SK-N-SH (cell line): ENCODE measurements at regions of chr2 and their contacts with region 1.

Region 1: DNA sequence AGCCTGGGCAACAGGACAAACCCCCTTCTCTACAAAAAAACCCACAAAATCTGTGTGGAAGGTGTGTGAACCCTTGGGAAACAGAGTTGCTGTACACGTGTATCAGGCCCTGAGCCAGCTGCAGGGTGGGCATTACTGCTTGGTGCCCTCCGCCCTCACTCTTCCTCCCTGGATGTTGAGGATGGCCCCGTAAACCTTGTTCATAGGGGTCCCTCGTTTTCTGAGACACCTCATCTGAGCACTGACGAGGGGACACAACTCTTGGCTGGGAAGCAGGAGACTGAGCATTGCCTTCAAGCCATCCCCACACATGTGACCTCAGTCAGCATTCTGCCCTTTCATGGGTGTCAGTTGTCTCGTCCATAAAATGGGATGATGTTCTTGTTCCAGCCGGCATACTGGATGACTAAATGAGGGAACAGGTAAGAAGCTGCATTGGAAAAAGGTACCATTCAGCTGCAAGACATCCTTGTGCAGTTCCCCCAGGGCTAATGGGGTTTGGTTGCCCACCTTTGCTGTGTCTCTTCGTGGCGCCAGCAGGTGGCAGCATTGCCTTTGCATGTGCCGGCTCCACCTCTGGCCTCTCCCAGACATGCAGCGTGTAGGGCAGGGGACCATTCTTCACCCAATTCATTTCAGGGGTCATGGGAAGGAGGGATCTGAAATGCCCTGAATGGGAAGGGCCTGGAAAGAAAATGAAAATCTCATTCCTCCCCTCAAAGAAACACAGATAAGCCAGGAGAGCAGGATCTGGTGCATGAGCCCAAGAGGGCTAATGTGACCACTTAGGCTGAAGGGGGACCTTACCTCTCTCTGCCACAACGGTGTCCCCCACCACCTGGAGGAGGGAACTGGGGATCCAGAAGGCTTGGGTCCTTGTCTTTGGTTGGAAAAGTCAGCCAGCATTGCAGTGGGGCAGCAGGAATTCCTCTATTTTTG is 36.4 kb upstream of the HAAO start:
- DNase-seq: peak; percentile 92
- H3K4me3 ChIP-seq: no peak overlapping the region; a peak in 1 of 4 replicates
- H3K27ac ChIP-seq: no peak overlapping the region
- H3K4me1 ChIP-seq: peaks cover 0 to 12% of the 10 kb centered on the region in 2 experiments; a peak in 1 of 4 replicates
- H3K27me3 ChIP-seq: no peaks in the 10 kb centered on the region
- CTCF ChIP-seq: peak; percentile 99
- EP300 ChIP-seq: no peak
- RAD21 ChIP-seq: peak; percentile 96

Region 2: GRCh38 chr2:42844901-42845821 is 16.4 kb after region 1 on chr2:
- CTCF ChIA-PET with region 1: interaction called, 88 read pairs
- POLR2A ChIA-PET with region 1: no interaction called
- DNase-seq: no peak
- H3K4me3 ChIP-seq: no peak overlapping the region
- H3K27ac ChIP-seq: no peak overlapping the region
- H3K4me1 ChIP-seq: no peaks in the 10 kb centered on the region; a peak in 1 of 4 replicates
- H3K27me3 ChIP-seq: no peaks in the 10 kb centered on the region
- CTCF ChIP-seq: no peak
- EP300 ChIP-seq: no peak
- RAD21 ChIP-seq: no peak

Region 3: GRCh38 chr2:42906557-42907411 is 78.0 kb after region 1 on chr2:
- CTCF ChIA-PET with region 1: interaction called, 21 read pairs
- POLR2A ChIA-PET with region 1: no interaction called
- DNase-seq: peak; percentile 85
- H3K4me3 ChIP-seq: no peak overlapping the region
- H3K27ac ChIP-seq: peak overlapping the region in 1 of 2 experiments; percentile 90; a peak in 2 of 4 replicates
- H3K4me1 ChIP-seq: peaks cover 10 to 40% of the 10 kb centered on the region in 2 experiments
- H3K27me3 ChIP-seq: no peaks in the 10 kb centered on the region
- CTCF ChIP-seq: no peak
- EP300 ChIP-seq: peak in 1 of 2 experiments; percentile 82; a peak in 1 of 4 replicates
- RAD21 ChIP-seq: no peak

Region 4: DNA sequence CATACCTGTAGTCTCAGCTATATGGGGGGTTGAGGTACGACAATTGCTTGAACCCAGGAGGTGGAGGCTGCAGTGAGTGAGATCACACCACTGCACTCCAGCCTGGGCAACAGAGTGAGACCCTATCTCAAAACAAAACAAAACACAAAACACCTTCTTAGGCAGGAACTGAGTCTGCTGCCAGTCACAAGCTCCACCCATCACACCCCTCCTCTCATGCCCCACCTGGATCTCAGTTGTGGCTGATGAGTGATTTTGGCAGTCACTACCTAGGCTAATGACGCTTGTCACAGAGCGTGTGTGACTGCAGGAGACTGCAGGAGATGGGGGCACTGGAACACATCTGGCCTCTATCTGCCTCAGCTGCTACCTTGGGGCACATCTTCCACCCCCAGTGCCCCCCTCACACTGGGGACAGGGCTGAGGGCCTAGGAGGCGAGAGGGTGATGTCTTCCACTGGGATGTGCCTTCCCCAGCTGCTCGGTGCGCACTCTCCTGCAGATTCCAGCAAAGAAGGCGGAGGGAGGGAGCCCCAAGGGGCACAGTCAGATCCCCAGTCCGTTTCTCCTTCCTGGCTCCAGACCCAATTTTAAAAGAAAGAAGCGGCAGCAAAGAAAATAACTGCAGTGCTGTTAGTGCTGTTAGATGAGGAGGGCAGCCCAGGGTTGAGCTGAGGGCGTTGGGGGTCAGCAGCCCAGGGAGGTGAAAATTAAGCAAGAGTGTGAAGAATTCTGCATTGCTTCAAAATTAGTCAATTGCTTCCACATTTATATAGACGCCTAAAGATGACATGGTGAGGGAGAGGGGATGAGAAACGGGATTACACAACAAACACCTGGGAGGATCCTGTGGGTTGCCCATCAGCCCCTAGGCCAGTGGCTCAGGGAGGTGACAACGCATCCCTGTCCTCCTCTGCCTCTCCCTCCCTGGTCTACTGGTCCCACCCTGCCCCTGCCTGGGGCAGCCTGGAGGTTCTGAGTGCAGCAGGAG is 107.2 kb after region 1 on chr2:
- CTCF ChIA-PET with region 1: interaction called, 56 read pairs
- POLR2A ChIA-PET with region 1: no interaction called
- DNase-seq: no peak
- H3K4me3 ChIP-seq: no peak overlapping the region
- H3K27ac ChIP-seq: no peak overlapping the region
- H3K4me1 ChIP-seq: peaks cover 0 to 22% of the 10 kb centered on the region in 2 experiments; a peak in 1 of 4 replicates
- H3K27me3 ChIP-seq: no peaks in the 10 kb centered on the region
- CTCF ChIP-seq: no peak
- EP300 ChIP-seq: no peak
- RAD21 ChIP-seq: no peak

Region 5: GRCh38 chr2:43537137-43537536 is 708.4 kb after region 1 on chr2:
- CTCF ChIA-PET with region 1: interaction called, 80 read pairs
- POLR2A ChIA-PET with region 1: no interaction called
- DNase-seq: no peak
- H3K4me3 ChIP-seq: no peak overlapping the region
- H3K27ac ChIP-seq: no peak overlapping the region
- H3K4me1 ChIP-seq: peaks cover 8 to 13% of the 10 kb centered on the region in 2 experiments
- H3K27me3 ChIP-seq: no peaks in the 10 kb centered on the region
- CTCF ChIP-seq: no peak
- EP300 ChIP-seq: no peak
- RAD21 ChIP-seq: no peak

Region 6: GRCh38 chr2:43569921-43570320 is 741.2 kb after region 1 on chr2:
- CTCF ChIA-PET with region 1: interaction called, 38 read pairs
- POLR2A ChIA-PET with region 1: no interaction called
- DNase-seq: no peak
- H3K4me3 ChIP-seq: no peak overlapping the region
- H3K27ac ChIP-seq: no peak overlapping the region
- H3K4me1 ChIP-seq: no peaks in the 10 kb centered on the region
- H3K27me3 ChIP-seq: no peaks in the 10 kb centered on the region
- CTCF ChIP-seq: no peak
- EP300 ChIP-seq: no peak
- RAD21 ChIP-seq: no peak

Region 7: GRCh38 chr2:43605079-43605655 is 776.4 kb after region 1 on chr2:
- CTCF ChIA-PET with region 1: interaction called, 34 read pairs
- POLR2A ChIA-PET with region 1: no interaction called
- DNase-seq: peak; percentile 55
- H3K4me3 ChIP-seq: no peak overlapping the region
- H3K27ac ChIP-seq: no peak overlapping the region
- H3K4me1 ChIP-seq: no peaks in the 10 kb centered on the region
- H3K27me3 ChIP-seq: no peaks in the 10 kb centered on the region
- CTCF ChIP-seq: peak; percentile 81
- EP300 ChIP-seq: no peak
- RAD21 ChIP-seq: peak; percentile 72